Transverse colon (tissue), 4 donors: ENCODE measurements at regions of chr3 and their contacts with region 1.

Region 1: GRCh38 chr3:146218880-146219866 is 31.7 kb downstream of the PLSCR4 start:
- DNase-seq: peak; percentile 26
- H3K4me3 ChIP-seq: no peak overlapping the region
- H3K27ac ChIP-seq: no peak overlapping the region
- H3K4me1 ChIP-seq: peaks cover 0 to 45% (median 22%) of the 10 kb centered on the region in 4 donors
- H3K27me3 ChIP-seq: no peaks in the 10 kb centered on the region
- CTCF ChIP-seq: peak; percentile 68 to 82 (median 74)
- EP300 ChIP-seq: no peak
- POLR2A ChIP-seq: no peak

Region 2: DNA sequence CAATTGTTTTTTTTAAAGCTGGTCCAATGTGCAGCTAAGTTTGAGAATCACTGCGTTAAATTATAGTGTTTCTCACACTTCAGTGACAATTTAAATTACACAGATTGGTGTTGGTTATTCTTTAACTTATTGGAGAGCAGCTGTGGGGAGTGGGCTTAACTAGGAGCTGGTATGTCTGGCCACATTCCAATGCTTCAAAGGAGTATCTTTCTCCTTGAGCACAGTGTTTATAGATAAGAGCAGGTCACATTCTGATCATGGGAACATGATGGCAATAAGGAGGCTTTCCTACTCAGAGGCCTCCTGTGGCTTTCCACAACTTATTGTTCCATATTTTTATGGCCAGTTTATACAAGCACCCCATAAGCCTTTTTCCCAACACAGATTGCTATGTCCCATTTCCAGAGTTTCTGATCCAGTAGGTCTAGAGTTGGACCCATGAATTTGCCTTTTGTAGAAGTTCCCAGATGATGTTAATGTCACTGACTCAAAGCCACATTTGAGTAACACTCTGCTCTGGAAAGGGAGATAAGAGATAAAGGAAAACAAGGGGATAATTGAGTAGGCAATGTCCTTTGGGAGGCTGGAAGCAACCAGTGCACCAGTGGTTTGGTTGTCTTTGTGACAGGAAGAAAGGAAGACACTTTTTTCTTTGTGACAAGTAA is 64.7 kb after region 1 on chr3:
- in situ Hi-C with region 1: no loop called
- intact Hi-C with region 1: no loop called
- DNase-seq: no peak
- H3K4me3 ChIP-seq: no peak overlapping the region
- H3K27ac ChIP-seq: no peak overlapping the region
- H3K4me1 ChIP-seq: no peaks in the 10 kb centered on the region
- H3K27me3 ChIP-seq: no peaks in the 10 kb centered on the region
- CTCF ChIP-seq: no peak
- EP300 ChIP-seq: no peak
- POLR2A ChIP-seq: no peak

Region 3: GRCh38 chr3:146326670-146327543 is 107.7 kb after region 1 on chr3:
- in situ Hi-C with region 1: loop called (anchors 5 to 10 kb)
- intact Hi-C with region 1: loop called (anchors 2 kb)
- DNase-seq: peak; percentile 49
- H3K4me3 ChIP-seq: no peak overlapping the region
- H3K27ac ChIP-seq: no peak overlapping the region
- H3K4me1 ChIP-seq: no peaks in the 10 kb centered on the region
- H3K27me3 ChIP-seq: no peaks in the 10 kb centered on the region
- CTCF ChIP-seq: peak; percentile 43 to 76 (median 61)
- EP300 ChIP-seq: no peak
- POLR2A ChIP-seq: no peak

Region 4: DNA sequence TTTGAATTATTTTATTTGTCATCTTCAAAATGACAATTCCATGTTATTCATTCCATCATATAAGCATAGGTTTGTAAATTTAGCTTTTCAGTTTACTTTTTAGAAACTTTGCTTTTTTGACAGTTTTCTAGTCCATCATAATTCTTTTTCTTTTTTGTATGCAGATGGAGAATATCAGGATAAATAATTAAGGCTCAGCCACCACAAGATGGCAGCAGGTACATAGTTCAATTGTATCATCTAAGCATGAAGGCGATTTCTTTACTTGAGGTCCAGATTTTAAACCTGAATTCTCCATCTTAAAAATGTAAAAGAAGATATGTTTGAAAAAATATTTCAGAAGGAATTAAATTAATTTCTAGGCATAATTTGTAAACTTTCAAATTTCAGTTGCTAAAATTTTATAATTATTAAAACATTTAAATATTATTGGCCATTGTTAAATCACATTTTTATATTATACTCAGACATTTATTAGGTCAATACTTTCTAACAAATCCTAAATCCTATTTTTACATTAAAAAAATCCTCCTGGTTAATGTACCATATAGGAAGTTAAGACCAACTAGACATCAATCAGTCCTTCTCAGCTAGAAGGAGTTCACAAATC is 370.8 kb after region 1 on chr3:
- in situ Hi-C with region 1: loop called in 3 of 4 experiments (anchors 10 to 25 kb)
- intact Hi-C with region 1: no loop called
- DNase-seq: peak; percentile 12
- H3K4me3 ChIP-seq: no peak overlapping the region
- H3K27ac ChIP-seq: no peak overlapping the region
- H3K4me1 ChIP-seq: no peaks in the 10 kb centered on the region
- H3K27me3 ChIP-seq: no peaks in the 10 kb centered on the region
- CTCF ChIP-seq: peak; percentile 41 to 52 (median 50)
- EP300 ChIP-seq: no peak
- POLR2A ChIP-seq: no peak